ENCODE measurements at regions of chr1 and their contacts with region 1.

Region 1: GRCh38 chr1:204446370-204447111 is 34.9 kb upstream of the PPP1R15B start:
- DNase-seq: peak; percentile 88
- CTCF ChIP-seq: peak; percentile 83

Region 2: DNA sequence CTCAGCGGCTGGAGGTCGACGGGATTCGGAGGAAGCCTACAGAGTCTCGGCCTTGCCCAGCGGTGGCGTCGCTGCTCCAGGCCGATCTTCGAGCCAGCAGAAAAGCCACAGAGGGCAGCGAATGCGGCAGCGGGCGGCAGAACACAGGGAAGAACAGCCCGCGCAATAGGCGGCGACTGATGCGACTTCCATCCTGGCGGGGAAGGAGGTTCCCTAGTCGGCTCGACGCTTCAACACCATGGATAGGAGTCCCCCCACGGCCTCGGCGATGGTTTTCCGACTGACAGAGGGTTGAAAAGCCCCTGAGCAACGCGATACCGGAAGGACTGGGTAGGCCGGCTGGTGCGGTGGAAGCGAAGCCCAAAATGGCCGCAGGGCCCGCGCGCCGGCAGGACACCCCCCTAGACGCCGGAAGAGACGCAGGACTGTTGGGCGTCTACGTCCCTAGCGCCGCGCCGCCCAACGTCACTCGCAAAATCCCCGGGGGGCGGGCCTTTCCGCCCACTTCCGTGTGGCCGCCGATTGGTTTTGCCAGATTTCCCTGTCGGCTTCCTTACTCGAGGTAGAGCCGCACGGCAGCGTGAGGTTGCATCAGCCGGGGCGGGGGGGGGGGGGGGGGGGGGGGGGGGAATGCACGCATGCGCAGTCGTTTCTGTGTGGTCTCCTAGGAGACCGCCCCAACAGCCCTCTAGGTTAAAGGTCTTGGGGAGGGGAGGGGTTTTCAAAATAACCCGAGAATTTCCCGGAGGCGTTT is 34.9 kb before region 1 on chr1 and contains the start of gene PPP1R15B:
- CTCF ChIA-PET with region 1: interaction called, 11 read pairs
- POLR2A ChIA-PET with region 1: interaction called, 3 read pairs
- DNase-seq: peak; percentile 97
- CTCF ChIP-seq: no peak

Region 3: GRCh38 chr1:204494281-204495077 is 47.9 kb after region 1 on chr1 and contains the start of gene PIK3C2B:
- CTCF ChIA-PET with region 1: interaction called, 1,775 read pairs
- POLR2A ChIA-PET with region 1: interaction called, 4 read pairs
- DNase-seq: peak; percentile 90
- CTCF ChIP-seq: peak; percentile 47